Endothelial cell of umbilical vein (primary cell): ENCODE measurements at regions of chr11 and their contacts with region 1.

Region 1: GRCh38 chr11:96306933-96307775 is 35.8 kb downstream of the MAML2 start:
- DNase-seq: peak; percentile 99
- H3K4me3 ChIP-seq: peak overlapping the region in 2 of 3 experiments; percentile 8 to 24
- H3K27ac ChIP-seq: peak overlapping the region; percentile 98
- H3K4me1 ChIP-seq: peaks cover 84% of the 10 kb centered on the region
- H3K27me3 ChIP-seq: no peaks in the 10 kb centered on the region
- CTCF ChIP-seq: no peak
- POLR2A ChIP-seq: peak; percentile 52

Region 2: DNA sequence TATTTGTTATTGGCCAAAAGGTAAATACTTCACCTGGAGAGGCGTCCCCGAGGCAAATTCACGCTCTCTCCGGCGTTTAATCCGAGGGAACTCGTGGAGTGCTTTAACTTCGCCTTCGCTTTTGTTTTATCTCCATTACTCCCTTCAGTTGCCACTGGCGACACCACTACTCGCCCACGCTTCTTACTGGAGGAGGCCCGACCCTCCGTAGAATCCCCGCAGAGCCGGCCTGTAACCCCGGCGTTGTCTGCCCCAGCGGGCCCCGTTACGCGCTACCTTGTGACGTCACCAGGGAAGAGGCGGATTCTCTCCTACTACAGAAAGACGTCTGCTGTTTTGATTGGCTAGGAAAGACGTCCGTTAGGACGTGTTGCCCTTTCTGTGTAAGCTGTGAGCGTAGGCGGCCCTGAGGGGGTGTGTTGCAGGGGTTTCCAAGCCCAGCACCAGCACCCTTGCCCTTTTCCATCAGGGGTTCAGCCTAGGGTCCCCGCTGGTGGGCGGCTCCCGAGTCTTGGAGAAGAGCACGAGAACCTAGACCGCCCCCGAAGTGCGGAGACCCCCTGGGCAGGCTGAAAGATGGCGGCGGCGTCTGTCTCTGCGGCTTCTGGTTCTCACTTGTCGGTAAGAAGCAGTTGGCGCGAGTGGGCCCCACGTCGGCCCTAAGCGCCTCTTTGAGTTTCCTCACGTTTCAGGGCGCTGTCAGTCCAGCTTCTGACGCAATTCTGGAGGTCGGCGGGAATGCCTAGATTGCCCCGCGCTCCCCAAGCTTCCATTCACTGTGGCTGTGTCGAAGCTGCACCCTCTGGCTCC is 516.8 kb before region 1 on chr11 and contains the start of gene CEP57:
- CTCF ChIA-PET with region 1: no interaction called
- POLR2A ChIA-PET with region 1: no interaction called
- dilution Hi-C with region 1: no loop called
- intact Hi-C with region 1: loop called (anchors 2 kb)
- DNase-seq: peak; percentile 97
- H3K4me3 ChIP-seq: peak within 1 kb of the TSS; percentile 75 to 85 (median 84)
- H3K27ac ChIP-seq: peak within 1 kb of the TSS; percentile 90
- H3K4me1 ChIP-seq: peaks cover 21% of the 10 kb centered on the region
- H3K27me3 ChIP-seq: no peaks in the 10 kb centered on the region
- CTCF ChIP-seq: no peak
- POLR2A ChIP-seq: peak; percentile 79
- total RNA-seq, gene CEP57: 35.2 and 38.5 TPM in 2 replicates

Region 3: GRCh38 chr11:96054870-96055705 is 252.1 kb before region 1 on chr11:
- CTCF ChIA-PET with region 1: interaction called, 6 read pairs
- POLR2A ChIA-PET with region 1: no interaction called
- dilution Hi-C with region 1: no loop called
- intact Hi-C with region 1: loop called (anchors 1 kb)
- DNase-seq: peak; percentile 71
- H3K4me3 ChIP-seq: no peak overlapping the region
- H3K27ac ChIP-seq: no peak overlapping the region
- H3K4me1 ChIP-seq: peaks cover 14% of the 10 kb centered on the region
- H3K27me3 ChIP-seq: no peaks in the 10 kb centered on the region
- CTCF ChIP-seq: peak; percentile 37 to 39
- POLR2A ChIP-seq: no peak

Region 4: GRCh38 chr11:96162816-96163499 is 144.2 kb before region 1 on chr11:
- CTCF ChIA-PET with region 1: interaction called, 8 read pairs
- POLR2A ChIA-PET with region 1: no interaction called
- dilution Hi-C with region 1: no loop called
- intact Hi-C with region 1: loop called (anchors 1 kb)
- DNase-seq: peak; percentile 93
- H3K4me3 ChIP-seq: no peak overlapping the region
- H3K27ac ChIP-seq: peak overlapping the region; percentile 80
- H3K4me1 ChIP-seq: peaks cover 31% of the 10 kb centered on the region
- H3K27me3 ChIP-seq: no peaks in the 10 kb centered on the region
- CTCF ChIP-seq: no peak
- POLR2A ChIP-seq: no peak

Region 5: GRCh38 chr11:96228473-96228891 is 78.7 kb before region 1 on chr11:
- CTCF ChIA-PET with region 1: interaction called, 3 read pairs
- POLR2A ChIA-PET with region 1: interaction called, 3 read pairs
- dilution Hi-C with region 1: no loop called
- intact Hi-C with region 1: loop called (anchors 1 kb)
- DNase-seq: peak; percentile 96
- H3K4me3 ChIP-seq: peak overlapping the region in 1 of 3 experiments; percentile 9
- H3K27ac ChIP-seq: peak overlapping the region; percentile 98
- H3K4me1 ChIP-seq: peaks cover 50% of the 10 kb centered on the region
- H3K27me3 ChIP-seq: no peaks in the 10 kb centered on the region
- CTCF ChIP-seq: no peak
- POLR2A ChIP-seq: no peak

Region 6: DNA sequence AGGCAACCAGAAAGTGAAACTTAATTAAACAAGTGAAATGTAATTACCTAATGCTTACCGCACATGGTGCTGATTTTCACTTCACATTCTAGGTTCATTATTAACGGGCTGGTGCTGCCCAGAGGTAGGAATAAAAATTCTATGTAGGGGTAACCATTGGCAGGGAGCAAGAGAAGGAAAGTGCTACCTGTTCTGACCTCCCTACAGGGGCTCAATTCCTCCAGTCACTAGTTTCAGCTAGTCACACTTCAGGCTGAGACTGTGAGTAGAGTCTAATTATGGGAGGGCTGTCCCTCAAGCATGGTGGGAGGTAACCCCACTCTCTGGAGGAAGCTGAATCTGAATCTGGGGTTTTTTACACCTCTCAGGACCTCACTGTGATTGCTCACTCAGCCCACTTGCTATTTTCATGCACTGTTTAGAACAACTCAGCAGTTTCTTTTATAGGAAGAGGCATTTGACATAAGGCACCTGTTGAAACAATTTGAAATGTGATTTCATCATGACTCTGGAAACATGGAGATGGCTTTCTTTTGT is 39.6 kb before region 1 on chr11:
- CTCF ChIA-PET with region 1: no interaction called
- POLR2A ChIA-PET with region 1: interaction called, 3 read pairs
- dilution Hi-C with region 1: no loop called
- intact Hi-C with region 1: loop called (anchors 2 kb)
- DNase-seq: no peak
- H3K4me3 ChIP-seq: no peak overlapping the region
- H3K27ac ChIP-seq: peak overlapping the region; percentile 1
- H3K4me1 ChIP-seq: peaks cover 33% of the 10 kb centered on the region
- H3K27me3 ChIP-seq: no peaks in the 10 kb centered on the region
- CTCF ChIP-seq: no peak
- POLR2A ChIP-seq: no peak